ENCODE measurements at regions of chr11 and their contacts with region 1.

Region 1: GRCh38 chr11:114738954-114739353 is 60.6 kb downstream of the NXPE2 start:
- DNase-seq: no peak
- ATAC-seq: no peak
- H3K4me3 Mint-ChIP-seq: no peak overlapping the region
- H3K27ac Mint-ChIP-seq: no peak overlapping the region
- H3K4me1 Mint-ChIP-seq: no peaks in the 10 kb centered on the region
- H3K27me3 Mint-ChIP-seq: peaks cover 2% of the 10 kb centered on the region
- CTCF ChIP-seq: no peak

Region 2: GRCh38 chr11:114684636-114685035 is 54.3 kb before region 1 on chr11:
- CTCF ChIA-PET with region 1: no interaction called
- POLR2A ChIA-PET with region 1: no interaction called
- intact Hi-C with region 1: no loop called
- DNase-seq: no peak
- ATAC-seq: no peak
- H3K4me3 Mint-ChIP-seq: no peak overlapping the region
- H3K27ac Mint-ChIP-seq: no peak overlapping the region
- H3K4me1 Mint-ChIP-seq: no peaks in the 10 kb centered on the region
- H3K27me3 Mint-ChIP-seq: no peaks in the 10 kb centered on the region
- CTCF ChIP-seq: no peak

Region 3: DNA sequence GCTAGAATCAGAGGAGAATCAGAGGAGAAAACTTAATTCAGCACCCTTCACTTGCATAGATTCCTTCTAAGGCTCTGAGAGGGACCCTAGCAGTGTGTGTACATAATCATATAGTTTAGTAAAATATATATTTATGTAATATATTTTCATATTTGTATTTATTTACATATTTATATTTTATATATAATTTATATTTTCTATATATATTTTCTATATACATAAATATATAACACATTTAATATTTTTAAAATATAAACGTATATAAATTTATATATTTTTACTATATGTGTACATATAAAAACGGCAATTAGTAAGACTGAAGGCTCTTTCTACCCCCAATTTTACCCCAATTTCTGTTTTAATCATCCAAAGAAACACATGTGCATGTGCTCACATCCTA is 19.7 kb after region 1 on chr11:
- CTCF ChIA-PET with region 1: no interaction called
- POLR2A ChIA-PET with region 1: no interaction called
- intact Hi-C with region 1: no loop called
- DNase-seq: no peak
- ATAC-seq: no peak
- H3K4me3 Mint-ChIP-seq: no peak overlapping the region
- H3K27ac Mint-ChIP-seq: no peak overlapping the region
- H3K4me1 Mint-ChIP-seq: no peaks in the 10 kb centered on the region
- H3K27me3 Mint-ChIP-seq: no peaks in the 10 kb centered on the region
- CTCF ChIP-seq: no peak

Region 4: GRCh38 chr11:114774599-114775361 is 35.8 kb after region 1 on chr11:
- CTCF ChIA-PET with region 1: no interaction called
- POLR2A ChIA-PET with region 1: no interaction called
- intact Hi-C with region 1: no loop called
- DNase-seq: no peak
- ATAC-seq: no peak
- H3K4me3 Mint-ChIP-seq: no peak overlapping the region
- H3K27ac Mint-ChIP-seq: no peak overlapping the region
- H3K4me1 Mint-ChIP-seq: no peaks in the 10 kb centered on the region
- H3K27me3 Mint-ChIP-seq: peaks cover 2% of the 10 kb centered on the region
- CTCF ChIP-seq: no peak

Region 5: DNA sequence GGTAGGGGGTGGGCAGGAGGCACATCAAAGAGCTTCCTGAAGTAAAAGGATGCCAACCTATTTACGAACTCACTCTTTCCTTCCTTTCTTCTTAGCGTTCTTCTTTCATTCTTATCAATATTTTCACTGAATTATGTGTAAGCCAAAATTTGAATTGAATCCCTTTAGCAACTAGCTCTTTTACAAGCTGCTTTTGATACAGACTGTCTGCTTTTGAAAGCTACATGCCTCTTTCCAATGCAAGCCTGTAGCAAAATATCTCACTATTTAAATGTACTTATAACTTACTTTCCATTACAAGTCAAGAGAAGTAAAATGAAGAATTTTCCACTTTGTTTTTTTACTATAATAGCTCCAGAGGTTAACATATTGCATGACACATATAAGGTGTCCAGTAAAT is 125.9 kb after region 1 on chr11:
- CTCF ChIA-PET with region 1: no interaction called
- POLR2A ChIA-PET with region 1: no interaction called
- intact Hi-C with region 1: no loop called
- DNase-seq: no peak
- ATAC-seq: no peak
- H3K4me3 Mint-ChIP-seq: no peak overlapping the region
- H3K27ac Mint-ChIP-seq: no peak overlapping the region
- H3K4me1 Mint-ChIP-seq: no peaks in the 10 kb centered on the region
- H3K27me3 Mint-ChIP-seq: no peaks in the 10 kb centered on the region
- CTCF ChIP-seq: no peak

Region 6: GRCh38 chr11:116229236-116229970 is 1490.4 kb after region 1 on chr11:
- CTCF ChIA-PET with region 1: no interaction called
- POLR2A ChIA-PET with region 1: no interaction called
- intact Hi-C with region 1: loop called (anchors 5 kb)
- DNase-seq: no peak
- ATAC-seq: no peak
- H3K4me3 Mint-ChIP-seq: no peak overlapping the region
- H3K27ac Mint-ChIP-seq: no peak overlapping the region
- H3K4me1 Mint-ChIP-seq: no peaks in the 10 kb centered on the region
- H3K27me3 Mint-ChIP-seq: peaks cover 6% of the 10 kb centered on the region
- CTCF ChIP-seq: no peak